ENCODE measurements at regions of chr1 and their contacts with region 1.

Region 1: DNA sequence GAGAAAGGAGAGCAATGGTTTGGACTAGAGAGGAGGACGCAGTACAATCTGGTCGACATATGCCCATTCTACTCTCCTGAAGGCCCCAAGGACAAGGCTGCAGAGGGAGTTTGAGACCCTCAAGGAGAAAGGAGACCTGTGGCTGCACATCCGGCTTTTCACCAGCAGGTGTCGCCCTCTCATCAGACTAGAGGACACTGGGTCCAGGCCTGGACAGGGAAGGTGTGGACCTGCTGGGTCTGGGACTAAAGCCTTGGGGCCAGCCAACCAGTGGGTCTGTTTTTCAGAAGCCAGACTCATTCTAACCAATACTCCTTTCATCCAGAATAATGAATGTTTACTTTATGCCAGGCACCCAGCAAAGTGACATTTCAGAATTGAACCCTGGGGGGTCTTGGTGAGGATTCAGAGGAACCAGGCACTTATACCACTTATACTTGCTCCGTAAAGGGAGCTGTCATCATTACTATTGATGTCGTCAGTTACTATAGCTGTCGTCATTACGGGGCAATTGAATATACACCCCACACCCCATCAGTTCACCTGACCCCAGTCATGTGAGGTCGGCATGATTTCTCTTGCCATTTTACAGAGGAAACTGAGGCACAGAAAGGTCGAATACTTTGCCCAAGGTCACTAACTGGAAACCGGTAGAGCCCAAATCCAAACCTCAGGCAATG is 5.1 kb downstream of the SRARP start:
- DNase-seq: no peak
- ATAC-seq: peak; percentile 55
- H3K4me3 ChIP-seq: no peak overlapping the region
- H3K27ac ChIP-seq: no peak overlapping the region
- H3K4me1 ChIP-seq: peaks cover 35% of the 10 kb centered on the region
- H3K27me3 ChIP-seq: no peaks in the 10 kb centered on the region; a peak in 1 of 4 replicates
- CTCF ChIP-seq: peak; percentile 93 to 97 (median 93)
- EP300 ChIP-seq: no peak
- POLR2A ChIP-seq: no peak
- RAD21 ChIP-seq: peak; percentile 94

Region 2: GRCh38 chr1:15323351-15323988 is 685.7 kb before region 1 on chr1:
- CTCF ChIA-PET with region 1: no interaction called
- POLR2A ChIA-PET with region 1: no interaction called
- RAD21 ChIA-PET with region 1: no interaction called
- SMC1A ChIA-PET with region 1: no interaction called
- in situ Hi-C with region 1: no loop called
- intact Hi-C with region 1: no loop called
- DNase-seq: no peak
- ATAC-seq: peak; percentile 98
- H3K4me3 ChIP-seq: no peak overlapping the region
- H3K27ac ChIP-seq: no peak overlapping the region
- H3K4me1 ChIP-seq: no peaks in the 10 kb centered on the region
- H3K27me3 ChIP-seq: no peaks in the 10 kb centered on the region; a peak in 1 of 4 replicates
- CTCF ChIP-seq: peak; percentile 94 to 99 (median 94)
- EP300 ChIP-seq: no peak
- POLR2A ChIP-seq: no peak
- RAD21 ChIP-seq: peak; percentile 87

Region 3: GRCh38 chr1:15796086-15796462 is 213.1 kb before region 1 on chr1:
- CTCF ChIA-PET with region 1: interaction called, 37 read pairs
- POLR2A ChIA-PET with region 1: no interaction called
- RAD21 ChIA-PET with region 1: interaction called, 10 read pairs
- SMC1A ChIA-PET with region 1: interaction called, 8 read pairs
- in situ Hi-C with region 1: no loop called
- intact Hi-C with region 1: loop called (anchors 5 kb)
- DNase-seq: no peak
- ATAC-seq: no peak
- H3K4me3 ChIP-seq: no peak overlapping the region
- H3K27ac ChIP-seq: no peak overlapping the region
- H3K4me1 ChIP-seq: no peaks in the 10 kb centered on the region
- H3K27me3 ChIP-seq: no peaks in the 10 kb centered on the region
- CTCF ChIP-seq: no peak
- EP300 ChIP-seq: no peak
- POLR2A ChIP-seq: no peak
- RAD21 ChIP-seq: no peak

Region 4: DNA sequence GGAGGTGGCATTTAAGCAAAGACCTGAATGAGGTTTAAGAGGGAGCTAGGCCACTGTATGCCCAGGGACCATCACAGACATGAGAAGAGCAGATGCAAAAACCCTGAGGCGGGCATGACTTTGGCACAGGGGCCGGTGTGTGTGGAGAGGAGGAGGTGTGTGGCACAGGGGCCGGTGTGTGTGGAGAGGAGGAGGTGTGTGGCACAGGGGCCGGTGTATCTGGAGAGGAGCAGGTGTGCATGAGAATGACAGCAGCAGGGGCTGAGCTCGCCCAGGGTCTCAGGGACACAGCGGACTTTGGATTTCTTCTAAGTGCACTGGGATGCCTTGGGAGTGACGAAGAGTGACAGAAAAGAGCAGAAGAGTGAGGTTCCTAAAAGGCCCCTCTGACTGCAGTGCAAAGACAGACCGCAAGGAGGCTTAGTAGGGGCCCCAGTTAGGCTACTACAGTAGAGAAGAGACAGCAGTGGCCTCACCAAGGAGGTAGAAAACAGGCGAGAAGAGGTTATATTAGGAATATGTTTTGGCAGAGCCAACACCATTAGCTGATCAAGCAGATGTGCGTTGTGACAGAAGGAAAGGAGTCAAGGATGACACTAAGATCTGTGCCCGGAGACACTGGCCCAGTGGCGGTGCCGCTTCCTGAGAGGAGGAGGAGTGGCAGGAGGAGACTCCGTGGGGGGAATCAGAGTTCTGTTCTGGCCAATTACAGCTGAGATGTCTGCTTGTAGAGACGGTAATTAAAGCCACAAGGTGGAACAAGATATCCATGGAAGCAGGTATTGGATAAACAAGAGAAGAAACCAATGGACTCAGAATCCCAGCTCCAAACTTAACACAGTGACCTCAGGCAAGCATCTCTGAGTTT is 51.7 kb before region 1 on chr1:
- CTCF ChIA-PET with region 1: interaction called, 7 read pairs
- POLR2A ChIA-PET with region 1: no interaction called
- RAD21 ChIA-PET with region 1: interaction called, 12 read pairs
- SMC1A ChIA-PET with region 1: interaction called, 3 read pairs
- in situ Hi-C with region 1: no loop called
- intact Hi-C with region 1: no loop called
- DNase-seq: no peak
- ATAC-seq: peak; percentile 86
- H3K4me3 ChIP-seq: no peak overlapping the region
- H3K27ac ChIP-seq: no peak overlapping the region
- H3K4me1 ChIP-seq: peaks cover 3% of the 10 kb centered on the region
- H3K27me3 ChIP-seq: no peaks in the 10 kb centered on the region
- CTCF ChIP-seq: peak; percentile 22 to 61 (median 25); a peak in 5 of 6 replicates
- EP300 ChIP-seq: no peak
- POLR2A ChIP-seq: no peak
- RAD21 ChIP-seq: no peak

Region 5: GRCh38 chr1:16032388-16033103 is 23.4 kb after region 1 on chr1:
- CTCF ChIA-PET with region 1: interaction called, 37 read pairs
- POLR2A ChIA-PET with region 1: interaction called, 3 read pairs
- RAD21 ChIA-PET with region 1: interaction called, 26 read pairs
- SMC1A ChIA-PET with region 1: interaction called, 17 read pairs
- in situ Hi-C with region 1: no loop called
- intact Hi-C with region 1: loop called (anchors 1 kb)
- DNase-seq: no peak
- ATAC-seq: peak; percentile 97
- H3K4me3 ChIP-seq: no peak overlapping the region
- H3K27ac ChIP-seq: no peak overlapping the region
- H3K4me1 ChIP-seq: no peaks in the 10 kb centered on the region
- H3K27me3 ChIP-seq: no peaks in the 10 kb centered on the region
- CTCF ChIP-seq: peak; percentile 83 to 98 (median 83)
- EP300 ChIP-seq: no peak
- POLR2A ChIP-seq: no peak
- RAD21 ChIP-seq: peak; percentile 92

Region 6: GRCh38 chr1:16078925-16079656 is 69.9 kb after region 1 on chr1:
- CTCF ChIA-PET with region 1: interaction called, 23 read pairs
- POLR2A ChIA-PET with region 1: no interaction called
- RAD21 ChIA-PET with region 1: interaction called, 5 read pairs
- SMC1A ChIA-PET with region 1: interaction called, 4 read pairs
- in situ Hi-C with region 1: no loop called
- intact Hi-C with region 1: no loop called
- DNase-seq: peak; percentile 49
- ATAC-seq: peak; percentile 88
- H3K4me3 ChIP-seq: peak overlapping the region; percentile 38; the same call in 1 of the 2 replicates
- H3K27ac ChIP-seq: peak overlapping the region; percentile 0; the same call in 1 of the 2 replicates
- H3K4me1 ChIP-seq: peaks cover 8% of the 10 kb centered on the region
- H3K27me3 ChIP-seq: no peaks in the 10 kb centered on the region
- CTCF ChIP-seq: peak; percentile 92 to 95 (median 93)
- EP300 ChIP-seq: no peak
- POLR2A ChIP-seq: no peak
- RAD21 ChIP-seq: peak; percentile 88

Region 7: DNA sequence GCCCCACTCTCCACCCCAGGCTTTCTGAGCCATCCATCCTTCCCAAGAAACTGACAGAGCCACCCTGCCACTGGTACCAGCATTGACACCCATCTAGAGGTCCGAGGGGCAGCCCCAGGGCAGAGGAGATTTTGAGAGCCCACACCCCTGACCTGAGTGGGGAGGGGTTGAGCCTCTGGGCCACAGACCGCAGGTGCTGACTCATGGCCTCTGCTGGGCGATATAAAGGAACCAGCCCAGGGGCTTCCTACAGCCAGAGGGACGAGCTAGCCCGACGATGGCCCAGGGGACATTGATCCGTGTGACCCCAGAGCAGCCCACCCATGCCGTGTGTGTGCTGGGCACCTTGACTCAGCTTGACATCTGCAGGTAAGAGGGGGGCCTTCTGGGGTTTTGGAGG is 1298.8 kb after region 1 on chr1 and contains the start of gene PADI4:
- CTCF ChIA-PET with region 1: no interaction called
- POLR2A ChIA-PET with region 1: no interaction called
- RAD21 ChIA-PET with region 1: no interaction called
- SMC1A ChIA-PET with region 1: no interaction called
- in situ Hi-C with region 1: no loop called
- intact Hi-C with region 1: no loop called
- DNase-seq: no peak
- ATAC-seq: no peak
- H3K4me3 ChIP-seq: no peak within 1 kb of the TSS
- H3K27ac ChIP-seq: no peak within 1 kb of the TSS
- H3K4me1 ChIP-seq: no peaks in the 10 kb centered on the region
- H3K27me3 ChIP-seq: no peaks in the 10 kb centered on the region; a peak in 1 of 4 replicates
- CTCF ChIP-seq: no peak
- EP300 ChIP-seq: no peak
- POLR2A ChIP-seq: no peak
- RAD21 ChIP-seq: no peak
- polyA plus RNA-seq, gene PADI4: 0.15 TPM in 1 of 2 experiments, not detected in the other

Measured in GM12878 (cell line).